ENCODE measurements at regions of chr19 and their contacts with region 1.

Region 1: GRCh38 chr19:2840794-2841790 is at the start of gene ZNF555:
- ATAC-seq: peak; percentile 95 to 97 (median 96)
- H3K4me3 ChIP-seq: peak within 1 kb of the TSS; percentile 88 to 94 (median 92)
- H3K27ac ChIP-seq: peak within 1 kb of the TSS; percentile 91 to 98
- H3K4me1 ChIP-seq: peaks cover 0 to 6% of the 10 kb centered on the region in 2 donors
- total RNA-seq, gene ZNF555: 1.1 to 11.6 (median 8.7) TPM

Region 2: DNA sequence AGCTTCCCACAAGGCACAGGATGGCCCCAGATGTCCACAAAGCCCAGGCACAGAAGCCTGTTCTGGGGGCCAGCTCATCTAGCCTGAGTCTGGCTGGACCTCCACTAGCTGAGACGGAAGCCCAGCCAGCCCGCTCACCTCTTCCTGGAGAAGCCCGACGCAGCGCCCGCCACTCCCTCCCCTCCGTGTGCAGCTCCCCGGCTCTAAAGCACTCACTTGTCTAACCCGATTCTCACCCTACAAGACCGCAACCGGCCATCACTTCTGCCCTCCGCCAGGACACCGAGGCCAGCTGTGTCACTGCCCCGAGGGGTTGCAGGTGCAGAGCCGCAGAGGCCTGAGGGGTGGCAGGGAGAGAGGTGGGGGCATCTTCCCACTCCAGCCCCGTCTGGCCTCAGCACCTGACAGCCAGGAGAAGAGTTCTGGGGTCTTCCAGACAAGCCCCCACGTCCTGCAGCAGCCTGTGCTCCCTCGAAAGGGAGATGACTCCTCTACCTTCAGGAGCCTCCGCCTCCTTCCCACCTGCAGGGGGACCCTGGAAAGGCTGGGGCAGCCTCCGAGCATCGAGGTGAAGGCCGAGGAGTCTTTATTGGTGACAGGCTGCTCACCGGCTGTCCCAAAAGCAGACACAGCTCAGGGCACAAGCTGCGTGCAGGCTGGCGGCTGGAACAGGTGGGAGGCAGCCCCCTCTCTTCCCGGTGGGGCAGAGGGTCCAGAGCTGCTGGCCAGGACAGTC is 114.0 kb before region 1 on chr19:
- in situ Hi-C with region 1: no loop called
- ATAC-seq: peak in 1 of 8 experiments; percentile 1
- H3K4me3 ChIP-seq: no peak overlapping the region
- H3K27ac ChIP-seq: no peak overlapping the region
- H3K4me1 ChIP-seq: peaks cover 7 to 17% of the 10 kb centered on the region in 2 donors

Region 3: GRCh38 chr19:2944775-2945574 is 103.9 kb after region 1 on chr19 and contains the start of gene ZNF77:
- in situ Hi-C with region 1: loop called in 1 of 9 experiments (anchors 25 kb)
- ATAC-seq: peak; percentile 97 to 98 (median 98)
- H3K4me3 ChIP-seq: peak within 1 kb of the TSS; percentile 65 to 91 (median 87)
- H3K27ac ChIP-seq: peak within 1 kb of the TSS; percentile 80 to 86
- H3K4me1 ChIP-seq: peaks cover 6 to 10% of the 10 kb centered on the region in 2 donors
- total RNA-seq, gene ZNF77: 1.7 to 9.9 (median 7.7) TPM